ENCODE measurements at regions of chr12 and their contacts with region 1.

Region 1: GRCh38 chr12:12442548-12443071 is 85.7 kb downstream of the BORCS5 start:
- DNase-seq: no peak
- ATAC-seq: peak; percentile 46 to 75 (median 68)
- H3K4me3 ChIP-seq: no peak overlapping the region
- H3K27ac ChIP-seq: peak overlapping the region; percentile 5 to 89 (median 72)
- H3K4me1 ChIP-seq: peaks cover 7 to 78% (median 45%) of the 10 kb centered on the region in 9 donors
- H3K27me3 ChIP-seq: no peaks in the 10 kb centered on the region
- CTCF ChIP-seq: no peak

Region 2: DNA sequence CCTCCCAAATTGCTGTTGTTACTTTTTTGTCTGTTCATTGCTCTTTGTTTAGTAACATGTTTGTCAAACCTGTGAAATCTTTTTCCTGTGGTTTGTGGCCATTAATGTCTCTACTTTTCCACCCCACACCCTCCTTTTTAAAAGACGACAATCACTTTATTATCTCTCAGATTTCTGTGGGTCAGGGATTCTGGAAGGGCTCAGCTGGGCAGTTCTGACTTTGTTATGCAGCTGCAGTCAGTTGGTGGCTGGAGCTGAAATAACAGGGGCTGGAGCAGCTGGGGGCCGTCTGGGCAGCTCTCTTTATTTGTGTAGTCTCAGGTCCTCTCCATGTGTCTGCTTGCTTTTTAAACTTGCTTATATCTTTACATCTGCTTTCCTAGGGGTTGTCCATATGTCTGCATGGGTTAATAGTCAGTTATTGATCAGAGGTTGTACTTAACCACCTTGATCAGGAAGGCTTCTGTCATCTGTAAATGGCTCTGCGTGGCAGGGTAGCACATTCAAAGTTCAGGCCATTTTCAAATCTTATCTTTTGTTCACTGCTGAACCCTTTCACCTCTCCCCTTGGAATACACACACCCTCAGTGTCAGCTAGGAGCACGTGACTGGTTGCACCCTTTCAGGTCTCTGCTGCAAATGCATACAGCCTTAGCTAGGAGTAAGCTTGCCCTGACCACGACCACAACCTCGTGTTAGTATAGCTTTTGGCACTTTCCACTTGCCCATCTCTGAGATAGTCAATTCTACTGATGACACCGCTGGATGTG is 57.9 kb before region 1 on chr12:
- intact Hi-C with region 1: loop called in 1 of 10 experiments (anchors 10 kb)
- DNase-seq: no peak
- ATAC-seq: peak in 1 of 8 donors; percentile 10
- H3K4me3 ChIP-seq: no peak overlapping the region
- H3K27ac ChIP-seq: peak overlapping the region in 1 of 10 donors; percentile 57
- H3K4me1 ChIP-seq: peaks cover 0 to 31% (median 9%) of the 10 kb centered on the region in 9 donors
- H3K27me3 ChIP-seq: no peaks in the 10 kb centered on the region
- CTCF ChIP-seq: no peak

Measured in heart right ventricle (tissue), 16 donors.